ENCODE measurements at regions of chr6 and their contacts with region 1.

Region 1: DNA sequence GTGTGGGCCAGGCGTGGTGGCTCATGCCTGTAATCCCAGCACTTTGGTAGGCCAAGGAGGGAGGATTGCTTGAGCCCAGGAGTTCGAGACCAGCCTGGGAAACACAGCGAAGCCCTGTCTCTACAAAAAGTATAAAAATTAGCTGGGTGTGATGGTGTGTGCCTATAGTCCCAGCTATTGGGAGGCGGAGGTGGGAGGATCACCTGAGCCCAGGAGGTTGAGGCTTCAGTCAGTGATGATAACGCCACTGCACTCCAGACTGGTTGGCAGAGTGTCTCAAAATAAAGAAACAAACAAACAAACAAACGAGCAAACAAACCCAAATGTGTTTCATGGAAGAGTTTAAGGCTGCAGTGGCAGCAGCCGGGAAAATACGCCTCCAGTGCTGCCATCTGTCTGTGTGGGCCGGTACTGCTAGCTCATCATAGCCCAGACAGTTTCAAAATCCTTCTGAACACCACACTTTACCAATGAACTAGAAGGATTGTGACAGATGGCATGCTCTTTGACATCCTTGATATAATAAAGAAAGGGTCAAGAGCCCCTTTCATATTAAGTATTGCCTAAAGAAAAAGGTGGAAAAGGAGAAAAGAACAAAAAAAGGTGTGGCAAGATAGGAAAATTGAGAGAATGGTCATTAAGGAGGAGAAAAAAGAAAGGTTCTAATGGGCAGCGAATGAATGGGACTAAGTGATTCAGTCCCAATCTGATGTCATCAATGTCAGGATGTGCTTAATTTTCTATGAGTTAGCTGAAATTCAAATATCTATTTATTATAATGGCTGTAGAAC is 298.6 kb downstream of the SYNE1 start:
- DNase-seq: no peak
- ATAC-seq: peak; percentile 93
- H3K4me3 ChIP-seq: no peak overlapping the region
- H3K27ac ChIP-seq: no peak overlapping the region
- H3K4me1 ChIP-seq: no peaks in the 10 kb centered on the region
- H3K27me3 ChIP-seq: no peaks in the 10 kb centered on the region; a peak in 1 of 4 replicates
- CTCF ChIP-seq: peak; percentile 85 to 93 (median 93)
- EP300 ChIP-seq: no peak
- POLR2A ChIP-seq: no peak
- RAD21 ChIP-seq: peak; percentile 71

Region 2: DNA sequence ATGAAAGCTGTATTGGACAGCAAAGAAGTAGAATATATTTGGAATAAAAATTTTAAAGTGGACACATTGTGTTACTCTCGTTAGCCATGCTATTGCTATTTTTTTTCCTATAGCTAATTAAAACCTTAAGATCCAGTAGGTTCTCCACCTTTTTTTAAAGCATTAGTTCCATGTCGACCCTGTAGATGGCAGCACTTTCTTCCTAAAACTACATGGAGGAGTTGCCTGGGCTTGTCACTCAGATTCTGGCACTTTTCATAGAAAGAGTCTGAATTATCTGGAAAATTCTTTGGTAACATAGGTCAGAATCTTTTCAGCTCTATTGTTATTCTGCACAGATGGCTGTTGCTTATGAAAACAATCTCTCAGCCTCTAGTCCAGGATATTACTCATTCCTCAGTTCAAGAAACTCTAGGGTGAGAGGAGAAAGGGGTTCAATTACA is 573.1 kb before region 1 on chr6:
- CTCF ChIA-PET with region 1: interaction called, 22 read pairs
- POLR2A ChIA-PET with region 1: no interaction called
- RAD21 ChIA-PET with region 1: interaction called, 10 read pairs
- SMC1A ChIA-PET with region 1: interaction called, 6 read pairs
- in situ Hi-C with region 1: no loop called
- intact Hi-C with region 1: loop called (anchors 5 kb)
- DNase-seq: no peak
- ATAC-seq: peak; percentile 80
- H3K4me3 ChIP-seq: no peak overlapping the region
- H3K27ac ChIP-seq: no peak overlapping the region
- H3K4me1 ChIP-seq: no peaks in the 10 kb centered on the region
- H3K27me3 ChIP-seq: peaks cover 0 to 5% of the 10 kb centered on the region in 2 experiments; a peak in 1 of 4 replicates
- CTCF ChIP-seq: peak; percentile 60 to 76 (median 64)
- EP300 ChIP-seq: no peak
- POLR2A ChIP-seq: no peak
- RAD21 ChIP-seq: peak; percentile 71

Region 3: GRCh38 chr6:152267967-152268845 is 70.3 kb before region 1 on chr6:
- CTCF ChIA-PET with region 1: interaction called, 14 read pairs
- POLR2A ChIA-PET with region 1: no interaction called
- RAD21 ChIA-PET with region 1: interaction called, 14 read pairs
- SMC1A ChIA-PET with region 1: interaction called, 16 read pairs
- in situ Hi-C with region 1: no loop called
- intact Hi-C with region 1: loop called (anchors 2 kb)
- DNase-seq: no peak
- ATAC-seq: no peak
- H3K4me3 ChIP-seq: no peak overlapping the region
- H3K27ac ChIP-seq: no peak overlapping the region
- H3K4me1 ChIP-seq: peaks cover 9% of the 10 kb centered on the region; the same call in 1 of the 2 replicates
- H3K27me3 ChIP-seq: no peaks in the 10 kb centered on the region
- CTCF ChIP-seq: peak; percentile 24 to 61 (median 38); a peak in 3 of 6 replicates
- EP300 ChIP-seq: no peak
- POLR2A ChIP-seq: no peak
- RAD21 ChIP-seq: peak; percentile 79

Region 4: DNA sequence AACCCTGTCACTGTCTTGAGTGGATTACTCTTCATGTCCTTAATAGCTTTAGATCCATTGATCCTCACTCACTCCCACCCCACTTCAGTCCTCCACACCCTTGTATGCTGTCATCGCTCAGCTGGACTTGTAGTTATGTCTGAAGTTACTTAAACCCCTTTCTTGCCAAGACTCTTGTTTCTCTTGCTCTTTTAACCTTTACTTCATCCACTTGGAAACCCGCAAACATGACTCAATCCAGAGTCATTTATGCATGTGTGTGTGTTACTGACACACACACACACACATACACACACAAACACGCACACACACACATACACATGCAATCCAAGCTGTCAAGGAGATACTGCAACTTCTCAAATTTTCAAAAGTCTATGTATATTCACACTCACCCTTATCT is 43.2 kb before region 1 on chr6:
- CTCF ChIA-PET with region 1: interaction called, 48 read pairs
- POLR2A ChIA-PET with region 1: no interaction called
- RAD21 ChIA-PET with region 1: interaction called, 100 read pairs
- SMC1A ChIA-PET with region 1: interaction called, 83 read pairs
- in situ Hi-C with region 1: no loop called
- intact Hi-C with region 1: no loop called
- DNase-seq: no peak
- ATAC-seq: no peak
- H3K4me3 ChIP-seq: no peak overlapping the region
- H3K27ac ChIP-seq: no peak overlapping the region
- H3K4me1 ChIP-seq: peaks cover 6% of the 10 kb centered on the region
- H3K27me3 ChIP-seq: no peaks in the 10 kb centered on the region
- CTCF ChIP-seq: no peak
- EP300 ChIP-seq: no peak
- POLR2A ChIP-seq: no peak
- RAD21 ChIP-seq: no peak

Region 5: GRCh38 chr6:152309648-152310047 is 28.9 kb before region 1 on chr6:
- CTCF ChIA-PET with region 1: interaction called, 14 read pairs
- POLR2A ChIA-PET with region 1: no interaction called
- RAD21 ChIA-PET with region 1: interaction called, 4 read pairs
- SMC1A ChIA-PET with region 1: interaction called, 9 read pairs
- in situ Hi-C with region 1: no loop called
- intact Hi-C with region 1: no loop called
- DNase-seq: no peak
- ATAC-seq: peak; percentile 73
- H3K4me3 ChIP-seq: no peak overlapping the region
- H3K27ac ChIP-seq: no peak overlapping the region
- H3K4me1 ChIP-seq: no peaks in the 10 kb centered on the region
- H3K27me3 ChIP-seq: no peaks in the 10 kb centered on the region
- CTCF ChIP-seq: no peak
- EP300 ChIP-seq: no peak
- POLR2A ChIP-seq: no peak
- RAD21 ChIP-seq: no peak

Region 6: DNA sequence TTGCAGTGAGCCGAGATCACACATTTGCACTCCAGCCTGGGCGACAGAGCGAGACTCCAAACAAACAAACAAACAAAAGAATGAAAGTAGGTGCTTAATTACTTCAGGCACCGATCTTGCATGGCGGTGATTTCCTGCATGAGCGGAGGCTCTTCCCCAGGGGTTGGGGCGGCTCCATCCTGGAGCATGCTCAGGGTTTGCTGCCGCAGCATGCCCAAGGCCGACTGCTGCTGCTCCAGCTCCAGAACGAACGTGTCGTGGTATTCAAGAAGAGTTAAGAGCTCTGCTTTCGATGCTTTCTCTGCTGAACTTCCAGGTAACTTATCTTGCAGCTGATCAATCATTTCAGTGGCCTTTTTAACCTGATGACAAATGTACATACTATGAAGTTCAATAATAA is 15.2 kb before region 1 on chr6:
- CTCF ChIA-PET with region 1: interaction called, 33 read pairs
- POLR2A ChIA-PET with region 1: no interaction called
- RAD21 ChIA-PET with region 1: interaction called, 6 read pairs
- SMC1A ChIA-PET with region 1: interaction called, 5 read pairs
- in situ Hi-C with region 1: no loop called
- intact Hi-C with region 1: no loop called
- DNase-seq: no peak
- ATAC-seq: no peak
- H3K4me3 ChIP-seq: no peak overlapping the region
- H3K27ac ChIP-seq: no peak overlapping the region
- H3K4me1 ChIP-seq: no peaks in the 10 kb centered on the region
- H3K27me3 ChIP-seq: peaks cover 0 to 1% of the 10 kb centered on the region in 2 experiments; a peak in 1 of 4 replicates
- CTCF ChIP-seq: no peak
- EP300 ChIP-seq: no peak
- POLR2A ChIP-seq: no peak
- RAD21 ChIP-seq: no peak